Cardiac septum (tissue), 1 donor: ENCODE measurements at regions of chr2 and their contacts with region 1.

Region 1: GRCh38 chr2:11778923-11779757 is 32.7 kb downstream of the LPIN1 start:
- DNase-seq: peak; percentile 85

Region 2: DNA sequence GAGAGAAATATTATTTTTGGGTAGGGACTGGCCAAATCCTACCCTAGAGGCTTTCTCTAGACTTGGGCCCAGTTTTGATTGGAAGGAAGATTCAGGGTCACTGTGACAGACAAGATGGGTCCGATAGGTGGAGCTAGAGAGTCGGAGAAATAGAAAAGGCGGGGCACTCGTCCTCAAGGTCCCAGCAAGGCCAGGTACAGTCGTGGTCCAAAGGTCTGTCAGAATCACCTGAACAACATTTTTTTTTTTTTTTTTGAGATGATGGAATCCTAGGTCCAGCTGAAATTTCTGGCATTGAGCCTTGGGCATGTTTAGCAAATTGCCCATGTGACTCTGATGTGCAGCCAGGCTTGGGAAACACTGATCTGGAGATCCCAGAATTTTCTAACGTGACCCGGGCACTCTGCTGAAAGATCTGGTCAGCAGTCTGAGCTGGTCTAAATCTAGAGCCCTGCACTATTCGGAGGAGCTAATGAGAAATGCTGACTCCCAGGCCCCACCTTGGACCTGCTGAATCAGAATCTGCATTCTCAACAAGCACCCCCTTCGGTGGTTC is 86.1 kb before region 1 on chr2:
- intact Hi-C with region 1: loop called (anchors 2 kb)
- DNase-seq: no peak

Region 3: DNA sequence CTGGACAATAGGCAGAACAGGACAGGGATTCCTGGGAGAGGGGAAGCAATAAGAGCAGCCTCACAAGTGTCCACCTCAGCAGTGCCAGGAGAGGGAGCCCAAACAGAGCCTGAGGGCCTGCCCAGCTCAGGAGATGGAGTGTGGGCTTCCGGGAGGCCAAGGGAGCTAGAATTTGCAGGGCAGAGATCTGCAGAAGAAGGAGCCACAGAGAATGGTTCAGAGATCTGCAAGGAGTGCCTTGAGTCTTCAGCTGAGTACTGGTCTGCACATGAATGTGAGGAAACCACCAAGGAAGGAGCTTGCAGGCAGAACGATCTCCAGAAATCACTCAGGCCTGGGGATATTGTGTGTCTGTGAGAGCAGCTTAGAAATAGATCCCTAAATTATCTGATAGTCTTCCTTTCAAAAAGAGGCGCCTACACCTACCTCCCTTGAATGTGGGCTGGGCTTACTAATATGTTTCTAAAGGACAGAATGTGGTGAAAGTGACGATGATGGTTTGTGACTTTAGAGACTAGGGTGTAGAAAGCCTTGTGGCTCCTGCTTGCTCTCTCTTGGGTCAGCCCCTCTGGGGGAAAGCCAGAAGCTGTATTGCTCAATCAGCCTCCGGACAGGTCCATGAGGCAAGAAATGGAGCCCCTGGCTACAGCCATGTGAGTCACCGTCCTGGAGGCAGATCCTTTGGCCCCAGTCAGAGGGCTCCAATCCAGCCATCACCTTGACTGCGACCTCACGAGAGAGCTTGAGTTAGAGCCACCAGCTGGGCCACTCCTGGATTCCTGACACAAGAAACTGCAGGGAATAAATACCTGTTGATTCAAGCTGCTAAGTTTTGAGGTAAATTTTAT is 40.3 kb before region 1 on chr2:
- intact Hi-C with region 1: loop called (anchors 2 kb)
- DNase-seq: no peak

Region 4: DNA sequence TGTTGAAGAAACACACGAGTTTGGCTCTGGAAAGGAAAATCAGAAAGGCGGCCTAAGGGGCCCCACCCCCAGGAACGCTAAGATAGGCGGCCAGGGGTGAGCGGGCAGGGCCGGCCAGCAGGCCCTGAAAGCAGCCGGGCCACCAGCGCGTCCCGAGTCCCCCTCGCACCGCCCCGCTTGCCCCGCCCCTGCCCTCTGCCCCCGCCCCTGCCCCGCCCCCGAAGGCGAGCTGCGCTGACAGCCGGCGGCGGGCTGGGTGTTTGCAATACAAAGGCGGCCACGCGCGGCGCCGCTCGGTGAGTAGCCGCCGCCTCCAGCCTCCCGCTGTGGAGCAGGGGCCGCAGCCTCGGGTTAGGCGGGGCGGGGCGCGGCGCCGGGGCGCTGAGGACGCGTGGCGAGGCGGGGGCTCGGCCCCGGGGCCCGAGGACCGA is 32.7 kb before region 1 on chr2 and contains the start of gene LPIN1:
- intact Hi-C with region 1: loop called (anchors 2 kb)
- DNase-seq: peak; percentile 94
- total RNA-seq, gene LPIN1: 27.8 TPM

Region 5: GRCh38 chr2:11850082-11850481 is 70.9 kb after region 1 on chr2:
- intact Hi-C with region 1: no loop called
- DNase-seq: peak; percentile 65

Region 6: DNA sequence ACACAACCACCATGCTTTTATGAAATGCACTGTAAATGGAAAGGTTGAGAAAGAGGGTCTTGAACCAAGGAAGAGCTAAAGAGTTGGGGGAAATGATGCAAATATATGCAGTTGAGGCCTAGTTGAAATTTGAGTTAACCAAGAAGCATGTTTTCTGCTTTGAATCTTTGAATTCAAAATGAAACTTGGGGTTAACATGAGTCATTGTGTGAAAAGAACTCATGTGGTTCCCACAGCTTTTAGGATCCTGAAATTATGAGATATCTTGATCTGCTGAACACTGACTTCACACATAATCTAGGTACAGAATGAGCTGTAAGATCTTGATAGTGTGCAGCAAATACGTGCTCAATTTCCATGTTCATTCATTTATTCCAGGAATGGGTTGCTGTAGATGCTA is 514.7 kb after region 1 on chr2:
- intact Hi-C with region 1: no loop called
- DNase-seq: no peak